ENCODE measurements at regions of chr11 and their contacts with region 1.

Region 1: DNA sequence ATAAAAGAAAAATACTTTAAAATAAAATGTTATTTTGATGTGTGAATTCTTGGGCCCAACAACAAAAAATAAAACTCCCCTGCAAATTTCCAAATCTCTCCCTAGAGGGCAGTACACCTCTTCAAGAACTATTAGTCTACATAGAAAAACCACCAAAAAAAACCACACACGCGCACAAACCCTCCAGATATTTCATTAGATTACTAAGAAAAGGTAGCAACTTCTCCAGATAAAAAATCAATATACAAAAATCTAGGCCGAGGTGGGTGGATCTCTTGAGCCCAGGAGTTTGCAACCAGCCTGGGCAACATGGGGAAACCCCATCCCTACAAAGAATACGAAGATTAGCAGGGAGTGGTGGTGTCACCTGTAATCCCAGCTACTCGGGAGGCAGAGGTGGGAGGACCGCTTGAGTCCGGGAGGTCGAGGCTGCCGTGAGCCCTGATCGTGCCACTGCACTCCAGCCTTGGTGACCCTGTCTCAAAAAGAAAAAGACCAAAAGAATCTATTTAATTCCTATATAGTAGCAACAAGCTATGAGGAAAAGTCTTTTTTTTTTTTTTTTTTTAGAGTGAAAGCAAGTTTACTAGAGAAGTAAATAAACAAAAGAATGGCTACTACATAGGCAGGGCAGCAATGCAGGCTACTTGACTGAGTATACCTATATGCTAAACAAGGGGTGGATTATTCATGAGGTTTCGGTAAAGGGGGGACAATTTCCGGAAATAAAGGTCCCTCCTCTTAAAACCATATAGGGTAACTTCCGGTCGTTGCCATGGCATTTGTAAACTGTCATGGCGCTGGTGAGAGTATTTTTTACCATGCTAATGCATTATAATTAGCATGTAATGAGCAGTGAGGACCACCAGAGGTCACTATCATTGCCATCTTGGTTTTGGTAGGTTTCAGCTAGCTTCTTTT is 13.1 kb downstream of the B3GNT6 start:
- DNase-seq: peak; percentile 80 to 83
- ATAC-seq: peak; percentile 64

Region 2: DNA sequence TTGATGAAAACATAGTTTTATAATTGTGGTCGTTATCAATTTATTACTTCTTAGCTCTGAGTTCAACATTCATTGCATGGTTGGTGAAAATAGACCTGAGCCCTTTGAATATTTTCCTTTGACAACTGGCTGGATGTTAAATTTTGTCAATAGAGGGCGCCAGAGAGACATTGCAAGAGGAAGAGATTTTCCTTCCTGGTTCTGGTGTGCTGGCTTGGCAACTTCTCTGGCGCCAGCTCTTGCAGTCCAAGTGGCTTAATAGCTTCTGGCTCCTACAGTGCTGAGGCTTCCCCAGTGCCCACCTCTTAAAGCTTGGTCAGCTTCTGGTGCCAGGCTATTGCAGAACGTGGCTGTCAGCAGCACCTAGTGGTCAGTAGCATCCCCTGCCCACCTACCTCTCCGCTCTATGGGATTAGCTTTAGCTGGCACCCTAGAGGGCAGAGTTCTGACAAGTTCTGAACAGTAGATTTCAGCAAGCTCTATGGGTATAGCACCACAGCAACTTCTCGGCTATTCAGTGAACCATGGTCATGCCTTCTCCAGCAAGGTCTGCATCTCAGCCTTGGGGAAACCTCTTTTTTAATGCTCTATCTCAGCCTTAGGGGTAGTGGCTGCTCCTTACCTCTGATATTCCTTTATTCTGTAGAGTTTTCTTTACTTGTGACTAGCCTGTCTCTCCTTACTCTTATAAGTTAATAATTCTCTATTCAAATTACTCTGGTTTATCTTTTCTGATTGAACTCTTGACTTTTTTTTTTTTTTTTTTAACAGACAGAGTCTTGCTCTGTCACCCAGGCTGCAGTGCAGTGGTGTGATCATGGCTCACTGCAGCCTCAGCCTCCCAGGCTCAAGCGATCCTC is 127.2 kb before region 1 on chr11:
- intact Hi-C with region 1: loop called in 1 of 2 experiments (anchors 10 kb)
- DNase-seq: peak; percentile 74 to 77
- ATAC-seq: peak; percentile 89

Region 3: GRCh38 chr11:77091146-77091940 is 44.1 kb after region 1 on chr11:
- intact Hi-C with region 1: loop called (anchors 2 to 10 kb)
- DNase-seq: peak; percentile 78 to 92
- ATAC-seq: peak; percentile 34

Region 4: DNA sequence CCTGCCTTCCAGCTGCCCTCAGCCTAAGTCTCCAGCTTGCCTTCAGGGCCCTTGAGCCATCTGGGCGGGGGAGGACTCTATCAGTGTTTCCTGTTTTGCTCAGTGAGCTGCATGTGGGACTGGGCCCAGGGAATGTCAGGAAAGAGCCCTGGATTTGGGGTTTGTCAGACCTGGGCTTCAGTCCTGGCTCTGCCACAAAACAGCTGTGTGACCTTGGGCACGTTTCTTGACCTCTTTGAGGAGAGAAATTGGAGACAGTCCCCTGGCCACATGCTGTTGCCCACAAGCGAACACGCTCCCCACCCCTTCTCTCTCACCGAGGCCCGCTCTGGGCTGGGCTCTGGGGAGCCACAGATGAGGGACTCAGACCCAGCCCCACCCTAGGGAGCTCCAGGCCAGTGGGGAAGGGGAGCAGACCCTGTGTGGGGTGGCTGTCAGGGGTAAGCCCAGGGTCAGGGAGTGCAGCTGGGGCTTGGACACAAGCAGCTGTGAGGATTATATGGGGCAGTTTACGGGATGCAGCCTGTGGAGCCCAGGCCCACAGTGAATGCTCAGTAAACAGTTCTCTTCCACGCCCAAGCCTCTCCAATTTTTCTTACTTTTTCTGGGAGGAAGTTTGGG is 93.1 kb after region 1 on chr11:
- intact Hi-C with region 1: no loop called
- DNase-seq: no peak
- ATAC-seq: no peak